ENCODE measurements at regions of chr2 and their contacts with region 1.

Region 1: GRCh38 chr2:26412091-26412673 is 10.5 kb downstream of the DRC1 start:
- DNase-seq: peak in 1 of 2 experiments; percentile 38
- H3K4me3 ChIP-seq: no peak overlapping the region
- H3K27ac ChIP-seq: peak overlapping the region; percentile 36
- H3K4me1 ChIP-seq: no peaks in the 10 kb centered on the region
- H3K27me3 ChIP-seq: no peaks in the 10 kb centered on the region
- CTCF ChIP-seq: no peak

Region 2: DNA sequence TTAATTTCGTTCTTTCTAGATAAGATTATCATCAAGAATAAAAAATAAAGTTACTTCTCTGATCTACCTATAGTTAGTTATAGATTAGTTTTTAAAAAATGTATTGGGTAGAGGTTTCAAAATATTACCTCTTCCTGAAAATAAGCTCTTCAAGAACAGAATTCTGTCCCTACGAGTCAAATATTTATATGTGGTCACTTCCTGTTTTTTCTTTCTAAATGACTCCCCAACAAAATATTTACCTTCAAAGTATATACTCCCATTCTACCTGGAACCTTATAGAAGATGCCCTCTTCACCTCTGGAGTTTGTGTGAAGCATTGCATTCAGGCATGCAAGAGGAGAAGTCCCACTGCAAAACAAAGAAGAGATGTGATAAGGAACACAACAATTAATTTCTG is 606.2 kb before region 1 on chr2:
- CTCF ChIA-PET with region 1: interaction called, 17 read pairs
- POLR2A ChIA-PET with region 1: no interaction called
- intact Hi-C with region 1: no loop called
- DNase-seq: no peak
- H3K4me3 ChIP-seq: no peak overlapping the region
- H3K27ac ChIP-seq: no peak overlapping the region
- H3K4me1 ChIP-seq: 0 out of 2 replicates have a peak, but pooled peaks cover 7% of the 10 kb centered on the region
- H3K27me3 ChIP-seq: no peaks in the 10 kb centered on the region
- CTCF ChIP-seq: no peak

Region 3: GRCh38 chr2:26456440-26457250 is 44.5 kb after region 1 on chr2:
- CTCF ChIA-PET with region 1: no interaction called
- POLR2A ChIA-PET with region 1: no interaction called
- intact Hi-C with region 1: loop called (anchors 5 kb)
- DNase-seq: peak; percentile 76 to 94
- H3K4me3 ChIP-seq: no peak overlapping the region
- H3K27ac ChIP-seq: peak overlapping the region; percentile 85
- H3K4me1 ChIP-seq: peaks cover 34% of the 10 kb centered on the region
- H3K27me3 ChIP-seq: no peaks in the 10 kb centered on the region
- CTCF ChIP-seq: no peak